Activated CD4-positive, alpha-beta T cell treated with anti-CD3 and anti-CD28 coated beads for 36 hours (primary cell): ENCODE measurements at regions of chr9 and their contacts with region 1.

Region 1: DNA sequence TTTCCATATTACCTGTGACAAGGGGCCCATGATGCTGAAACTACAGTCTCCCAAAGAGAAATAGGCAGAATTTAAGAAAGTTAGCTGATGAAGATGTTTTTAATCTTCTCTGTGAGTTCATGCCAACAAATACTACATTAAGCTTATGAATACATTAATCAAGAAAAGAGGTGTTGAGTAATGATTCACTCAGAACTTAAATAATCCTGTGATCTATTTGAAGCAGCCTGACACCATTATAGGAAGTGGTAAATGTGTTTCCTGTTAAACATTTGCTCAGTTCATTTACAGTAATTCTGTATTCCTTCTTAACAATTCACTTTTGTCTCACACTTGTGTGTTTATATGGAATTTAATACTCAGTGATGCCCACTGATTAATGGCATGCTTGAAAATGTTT is 75.0 kb upstream of the IZUMO3 start:
- DNase-seq: no peak
- ATAC-seq: no peak
- H3K4me3 Mint-ChIP-seq: no peak overlapping the region
- H3K27ac Mint-ChIP-seq: no peak overlapping the region
- H3K4me1 Mint-ChIP-seq: no peaks in the 10 kb centered on the region
- H3K27me3 Mint-ChIP-seq: no peaks in the 10 kb centered on the region

Region 2: DNA sequence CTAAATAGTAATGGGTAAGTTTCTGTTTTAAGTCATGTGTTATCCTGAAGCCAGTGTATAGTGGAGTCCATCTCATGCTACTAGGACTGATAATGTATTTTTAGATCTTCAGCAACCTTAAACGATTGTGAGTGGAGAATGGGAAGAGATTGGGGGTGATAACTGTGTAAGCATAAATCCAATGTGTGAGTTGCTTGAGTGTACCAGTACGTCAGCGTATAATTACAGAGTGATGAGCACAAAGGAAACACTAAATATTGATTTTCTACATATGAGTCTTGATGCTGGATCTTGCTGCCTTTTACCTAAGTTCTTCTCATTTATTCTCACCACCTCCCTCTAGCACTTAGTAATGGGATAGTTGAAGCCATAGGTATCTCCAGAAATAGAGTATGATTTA is 58.8 kb before region 1 on chr9:
- CTCF ChIA-PET with region 1: no interaction called
- POLR2A ChIA-PET with region 1: no interaction called
- intact Hi-C with region 1: loop called in 1 of 2 experiments (anchors 10 kb)
- DNase-seq: no peak
- ATAC-seq: no peak
- H3K4me3 Mint-ChIP-seq: no peak overlapping the region
- H3K27ac Mint-ChIP-seq: no peak overlapping the region
- H3K4me1 Mint-ChIP-seq: no peaks in the 10 kb centered on the region
- H3K27me3 Mint-ChIP-seq: no peaks in the 10 kb centered on the region